Activated CD4-positive, alpha-beta memory T cell treated with anti-CD3 and anti-CD28 coated beads for 36 hours (primary cell): ENCODE measurements at regions of chr13 and their contacts with region 1.

Region 1: GRCh38 chr13:45623515-45624090 is 8.1 kb upstream of the ERICH6B start:
- DNase-seq: no peak
- H3K4me3 Mint-ChIP-seq: no peak overlapping the region
- H3K27ac Mint-ChIP-seq: no peak overlapping the region
- H3K4me1 Mint-ChIP-seq: no peaks in the 10 kb centered on the region
- H3K27me3 Mint-ChIP-seq: peaks cover 39% of the 10 kb centered on the region

Region 2: GRCh38 chr13:45434556-45435371 is 188.8 kb before region 1 on chr13:
- CTCF ChIA-PET with region 1: no interaction called
- POLR2A ChIA-PET with region 1: no interaction called
- intact Hi-C with region 1: no loop called
- DNase-seq: no peak
- H3K4me3 Mint-ChIP-seq: no peak overlapping the region
- H3K27ac Mint-ChIP-seq: no peak overlapping the region
- H3K4me1 Mint-ChIP-seq: no peaks in the 10 kb centered on the region
- H3K27me3 Mint-ChIP-seq: no peaks in the 10 kb centered on the region

Region 3: GRCh38 chr13:45718063-45718462 is 94.5 kb after region 1 on chr13:
- CTCF ChIA-PET with region 1: interaction called, 46 read pairs
- POLR2A ChIA-PET with region 1: no interaction called
- intact Hi-C with region 1: loop called (anchors 1 kb)
- DNase-seq: no peak
- H3K4me3 Mint-ChIP-seq: no peak overlapping the region
- H3K27ac Mint-ChIP-seq: no peak overlapping the region
- H3K4me1 Mint-ChIP-seq: no peaks in the 10 kb centered on the region
- H3K27me3 Mint-ChIP-seq: peaks cover 3% of the 10 kb centered on the region

Region 4: DNA sequence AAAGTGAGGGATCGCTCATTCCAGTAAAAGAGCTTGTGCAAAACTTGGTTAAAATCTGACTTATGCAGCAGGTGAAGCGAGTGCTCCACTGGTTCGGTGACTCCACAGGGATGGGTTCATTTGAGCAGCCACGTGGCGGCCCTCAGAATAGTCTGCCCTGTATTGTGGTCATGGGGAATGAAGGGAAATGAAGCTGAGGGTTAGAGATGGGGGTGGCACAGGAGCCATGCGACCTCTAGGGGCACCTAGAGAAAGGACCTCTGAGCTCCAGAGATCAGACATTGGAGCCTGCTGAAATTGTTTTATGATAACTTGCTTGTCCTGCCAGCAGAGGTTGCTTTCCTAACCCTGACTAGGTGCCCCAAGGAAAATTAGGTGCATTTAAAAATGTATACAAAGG is 105.2 kb after region 1 on chr13:
- CTCF ChIA-PET with region 1: interaction called, 11 read pairs
- POLR2A ChIA-PET with region 1: no interaction called
- intact Hi-C with region 1: no loop called
- DNase-seq: peak; percentile 10
- H3K4me3 Mint-ChIP-seq: no peak overlapping the region
- H3K27ac Mint-ChIP-seq: no peak overlapping the region
- H3K4me1 Mint-ChIP-seq: no peaks in the 10 kb centered on the region
- H3K27me3 Mint-ChIP-seq: peaks cover 2% of the 10 kb centered on the region